MCF 10A (cell line): ENCODE measurements at regions of chr10 and their contacts with region 1.

Region 1: GRCh38 chr10:104274762-104275721 is 6.1 kb downstream of the GSTO2 start:
- DNase-seq: peak; percentile 73
- H3K4me3 Mint-ChIP-seq: peak overlapping the region; percentile 89
- H3K27ac Mint-ChIP-seq: peak overlapping the region; percentile 73
- H3K4me1 Mint-ChIP-seq: peaks cover 7% of the 10 kb centered on the region
- H3K27me3 Mint-ChIP-seq: no peaks in the 10 kb centered on the region
- CTCF ChIP-seq: peak; percentile 94

Region 2: DNA sequence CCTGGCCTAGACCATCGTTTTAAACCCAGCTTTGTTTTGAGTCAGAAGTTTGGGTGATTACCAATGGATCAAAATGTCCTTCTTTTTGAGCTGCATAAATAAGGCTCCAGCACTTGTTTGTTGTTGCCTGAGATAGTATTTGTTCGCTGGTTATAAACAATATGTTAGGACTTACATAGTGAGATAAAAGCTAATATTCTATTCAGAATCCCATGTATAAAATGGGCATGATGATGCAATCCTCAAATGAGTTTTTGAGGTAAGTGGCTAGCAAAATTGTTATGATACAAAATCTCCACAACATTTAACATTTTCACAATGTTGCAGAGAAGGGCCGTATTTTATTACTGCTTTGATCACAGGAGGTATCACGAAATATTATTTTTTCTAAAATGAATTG is 91.4 kb before region 1 on chr10:
- CTCF ChIA-PET with region 1: no interaction called
- POLR2A ChIA-PET with region 1: no interaction called
- intact Hi-C with region 1: no loop called
- DNase-seq: no peak
- H3K4me3 Mint-ChIP-seq: no peak overlapping the region
- H3K27ac Mint-ChIP-seq: no peak overlapping the region
- H3K4me1 Mint-ChIP-seq: no peaks in the 10 kb centered on the region
- H3K27me3 Mint-ChIP-seq: peaks cover 14% of the 10 kb centered on the region
- CTCF ChIP-seq: no peak

Region 3: GRCh38 chr10:104254493-104255310 is 20.3 kb before region 1 on chr10 and contains the start of gene GSTO1:
- CTCF ChIA-PET with region 1: interaction called, 139 read pairs
- POLR2A ChIA-PET with region 1: interaction called, 56 read pairs
- intact Hi-C with region 1: no loop called
- DNase-seq: peak; percentile 79
- H3K4me3 Mint-ChIP-seq: peak within 1 kb of the TSS; percentile 80
- H3K27ac Mint-ChIP-seq: peak within 1 kb of the TSS; percentile 85
- H3K4me1 Mint-ChIP-seq: peaks cover 28% of the 10 kb centered on the region
- H3K27me3 Mint-ChIP-seq: no peaks in the 10 kb centered on the region
- CTCF ChIP-seq: no peak
- total RNA-seq, gene GSTO1: 54.6 and 61.8 TPM in 2 replicates

Region 4: GRCh38 chr10:104308439-104308903 is 33.4 kb after region 1 on chr10:
- CTCF ChIA-PET with region 1: interaction called, 46 read pairs
- POLR2A ChIA-PET with region 1: interaction called, 6 read pairs
- intact Hi-C with region 1: no loop called
- DNase-seq: no peak
- H3K4me3 Mint-ChIP-seq: no peak overlapping the region
- H3K27ac Mint-ChIP-seq: peak overlapping the region; percentile 37
- H3K4me1 Mint-ChIP-seq: peaks cover 30% of the 10 kb centered on the region
- H3K27me3 Mint-ChIP-seq: no peaks in the 10 kb centered on the region
- CTCF ChIP-seq: no peak

Region 5: GRCh38 chr10:104328896-104329710 is 54.1 kb after region 1 on chr10:
- CTCF ChIA-PET with region 1: interaction called, 46 read pairs
- POLR2A ChIA-PET with region 1: interaction called, 18 read pairs
- intact Hi-C with region 1: no loop called
- DNase-seq: peak; percentile 97
- H3K4me3 Mint-ChIP-seq: peak overlapping the region; percentile 64
- H3K27ac Mint-ChIP-seq: peak overlapping the region; percentile 95
- H3K4me1 Mint-ChIP-seq: peaks cover 73% of the 10 kb centered on the region
- H3K27me3 Mint-ChIP-seq: no peaks in the 10 kb centered on the region
- CTCF ChIP-seq: no peak

Region 6: GRCh38 chr10:104345941-104346340 is 70.9 kb after region 1 on chr10:
- CTCF ChIA-PET with region 1: interaction called, 156 read pairs
- POLR2A ChIA-PET with region 1: interaction called, 38 read pairs
- intact Hi-C with region 1: loop called (anchors 1 kb)
- DNase-seq: no peak
- H3K4me3 Mint-ChIP-seq: no peak overlapping the region
- H3K27ac Mint-ChIP-seq: no peak overlapping the region
- H3K4me1 Mint-ChIP-seq: no peaks in the 10 kb centered on the region
- H3K27me3 Mint-ChIP-seq: no peaks in the 10 kb centered on the region
- CTCF ChIP-seq: no peak